ENCODE measurements at regions of chr15 and their contacts with region 1.

Region 1: GRCh38 chr15:76460871-76461270 is 124.3 kb downstream of the ISL2 start:
- DNase-seq: no peak
- H3K4me3 ChIP-seq: no peak overlapping the region
- H3K27ac ChIP-seq: no peak overlapping the region
- H3K4me1 ChIP-seq: no peaks in the 10 kb centered on the region
- H3K27me3 ChIP-seq: no peaks in the 10 kb centered on the region
- CTCF ChIP-seq: no peak

Region 2: DNA sequence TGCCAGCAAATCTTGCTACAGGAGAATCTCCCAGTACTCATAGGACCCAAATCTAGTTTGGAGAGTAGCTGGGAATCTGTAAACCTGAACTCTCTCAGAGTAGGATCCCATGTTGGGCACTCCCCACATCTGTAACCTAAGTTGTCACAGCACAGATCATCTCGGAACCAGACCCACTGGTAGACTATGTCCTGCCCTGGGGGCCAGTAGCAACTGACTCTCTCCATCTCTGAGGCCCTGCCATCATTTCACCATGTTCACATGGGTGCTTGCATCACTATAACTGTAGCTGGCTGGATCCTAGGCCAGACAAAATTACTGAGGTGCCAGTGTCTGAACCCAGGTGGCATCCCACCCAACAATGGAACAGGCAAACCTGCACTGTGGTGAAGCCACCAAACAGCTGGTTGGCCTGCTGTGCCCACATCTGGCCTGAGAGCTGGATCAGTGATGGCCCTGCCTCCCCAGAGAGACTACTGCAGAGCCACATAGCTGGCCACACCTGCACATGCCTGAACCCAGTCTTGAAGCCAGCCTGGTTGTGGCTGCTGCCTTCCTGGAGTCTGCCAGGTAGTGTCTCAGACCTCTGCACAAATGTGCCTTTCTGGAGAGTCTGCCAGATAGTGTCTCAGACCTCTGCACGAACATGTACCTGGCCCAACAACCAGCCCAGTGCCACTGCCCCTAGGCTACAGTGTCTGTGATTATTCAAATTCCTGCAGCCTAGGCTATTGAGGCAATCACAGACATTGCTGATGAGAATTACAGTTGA is 42.3 kb before region 1 on chr15:
- intact Hi-C with region 1: loop called (anchors 10 kb)
- DNase-seq: no peak
- H3K4me3 ChIP-seq: no peak overlapping the region
- H3K27ac ChIP-seq: no peak overlapping the region
- H3K4me1 ChIP-seq: no peaks in the 10 kb centered on the region
- H3K27me3 ChIP-seq: no peaks in the 10 kb centered on the region
- CTCF ChIP-seq: no peak

Measured in colonic mucosa (tissue), 4 donors.